Activated B cell treated with CpG ODN at 0.5 μM for 24 hours (primary cell): ENCODE measurements at regions of chr14 and their contacts with region 1.

Region 1: DNA sequence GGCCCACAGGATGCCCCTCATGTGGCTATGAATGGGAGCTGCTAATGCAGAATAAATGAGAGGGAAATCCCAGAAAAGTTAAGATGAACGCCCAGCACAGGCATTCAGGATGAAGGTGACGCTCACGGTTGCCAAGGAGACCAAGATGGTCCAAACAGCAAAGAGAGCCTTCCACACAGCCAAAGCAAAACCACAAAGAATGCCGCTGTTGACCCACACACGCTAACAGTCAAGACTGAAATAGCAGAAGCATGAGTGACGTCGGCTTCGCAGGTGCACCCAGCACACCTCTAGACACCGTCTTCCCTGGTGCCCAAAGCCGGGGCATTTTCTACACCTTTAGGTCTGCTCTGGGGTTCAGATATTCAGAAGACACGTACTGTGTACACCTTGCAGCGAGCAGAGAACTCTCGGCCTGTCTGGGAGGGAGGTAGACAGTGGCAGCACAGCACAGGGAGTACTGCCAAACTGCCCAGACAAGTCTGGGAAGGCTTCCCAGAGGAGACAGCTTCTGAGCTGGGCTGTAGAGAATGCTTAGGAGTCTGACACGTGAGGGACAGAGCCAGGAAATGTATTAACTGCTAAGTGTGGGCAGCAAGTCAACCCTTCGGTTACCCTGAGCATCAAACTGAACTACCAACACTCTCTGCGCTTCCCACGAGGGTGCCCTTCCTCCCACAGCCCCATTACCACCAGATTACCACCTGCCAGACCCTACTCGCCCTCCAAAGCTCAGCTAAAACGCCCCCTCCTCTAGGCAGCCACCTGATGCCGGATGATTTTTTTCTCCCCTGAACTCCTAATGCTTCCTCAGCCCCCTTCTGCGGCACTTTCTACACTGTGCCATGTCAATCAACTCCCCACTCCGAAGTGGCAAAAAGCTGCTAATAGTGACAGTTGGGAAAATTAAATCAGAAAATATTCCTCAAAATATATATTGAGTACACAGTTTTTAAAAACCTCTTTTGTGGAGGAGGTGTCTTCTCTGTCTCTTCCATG is 50.1 kb downstream of the CCDC88C start:
- DNase-seq: peak; percentile 63
- ATAC-seq: peak; percentile 72
- H3K4me3 Mint-ChIP-seq: peak overlapping the region; percentile 66
- H3K27ac Mint-ChIP-seq: peak overlapping the region; percentile 90
- H3K4me1 Mint-ChIP-seq: peaks cover 89% of the 10 kb centered on the region
- H3K27me3 Mint-ChIP-seq: no peaks in the 10 kb centered on the region
- CTCF ChIP-seq: no peak

Region 2: GRCh38 chr14:91249841-91250616 is 117.4 kb before region 1 on chr14:
- CTCF ChIA-PET with region 1: no interaction called
- POLR2A ChIA-PET with region 1: no interaction called
- intact Hi-C with region 1: no loop called
- DNase-seq: no peak
- ATAC-seq: peak; percentile 64
- H3K4me3 Mint-ChIP-seq: peak overlapping the region; percentile 62
- H3K27ac Mint-ChIP-seq: peak overlapping the region; percentile 90
- H3K4me1 Mint-ChIP-seq: peaks cover 45% of the 10 kb centered on the region
- H3K27me3 Mint-ChIP-seq: no peaks in the 10 kb centered on the region
- CTCF ChIP-seq: no peak

Region 3: GRCh38 chr14:91350813-91351511 is 16.5 kb before region 1 on chr14:
- CTCF ChIA-PET with region 1: interaction called, 4 read pairs
- POLR2A ChIA-PET with region 1: interaction called, 29 read pairs
- intact Hi-C with region 1: loop called (anchors 1 kb)
- DNase-seq: no peak
- ATAC-seq: peak; percentile 60
- H3K4me3 Mint-ChIP-seq: peak overlapping the region; percentile 81
- H3K27ac Mint-ChIP-seq: peak overlapping the region; percentile 85
- H3K4me1 Mint-ChIP-seq: peaks cover 93% of the 10 kb centered on the region
- H3K27me3 Mint-ChIP-seq: no peaks in the 10 kb centered on the region
- CTCF ChIP-seq: no peak

Region 4: DNA sequence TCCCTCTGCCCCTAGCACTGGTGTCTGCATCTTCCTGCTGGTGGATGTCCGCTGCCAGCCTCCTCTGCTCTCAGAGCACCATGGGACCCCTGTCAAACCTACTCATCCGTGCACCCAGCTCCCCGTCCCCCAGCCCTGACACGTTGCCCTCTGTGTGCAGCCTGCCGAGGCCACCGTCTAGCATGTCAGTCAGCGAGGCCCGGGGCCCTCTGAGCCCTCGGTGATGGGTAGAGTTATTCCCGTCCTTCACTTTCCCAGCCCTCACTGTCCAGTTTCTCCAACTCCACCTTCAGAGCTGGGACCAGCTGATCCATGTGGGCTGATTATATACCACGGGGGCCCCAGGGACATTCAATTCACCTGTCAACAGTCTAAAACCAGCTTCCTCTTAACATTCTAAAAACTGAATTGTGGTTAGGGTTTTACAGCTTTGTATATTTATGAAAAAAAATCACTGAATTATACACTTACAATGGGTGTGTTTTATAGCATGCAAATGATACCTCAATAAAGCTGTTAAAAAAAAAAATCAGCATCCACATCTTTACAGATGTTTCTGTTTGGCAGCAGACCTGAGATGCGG is 11.2 kb before region 1 on chr14:
- CTCF ChIA-PET with region 1: interaction called, 4 read pairs
- POLR2A ChIA-PET with region 1: interaction called, 29 read pairs
- intact Hi-C with region 1: loop called (anchors 1 kb)
- DNase-seq: no peak
- ATAC-seq: peak; percentile 41
- H3K4me3 Mint-ChIP-seq: peak overlapping the region; percentile 74
- H3K27ac Mint-ChIP-seq: peak overlapping the region; percentile 3
- H3K4me1 Mint-ChIP-seq: peaks cover 73% of the 10 kb centered on the region
- H3K27me3 Mint-ChIP-seq: no peaks in the 10 kb centered on the region
- CTCF ChIP-seq: no peak

Region 5: GRCh38 chr14:91418387-91419043 is 51.0 kb after region 1 on chr14:
- CTCF ChIA-PET with region 1: interaction called, 9 read pairs
- POLR2A ChIA-PET with region 1: interaction called, 114 read pairs
- intact Hi-C with region 1: loop called (anchors 1 kb)
- DNase-seq: peak; percentile 84
- ATAC-seq: peak; percentile 37
- H3K4me3 Mint-ChIP-seq: peak overlapping the region; percentile 81
- H3K27ac Mint-ChIP-seq: peak overlapping the region; percentile 93
- H3K4me1 Mint-ChIP-seq: peaks cover 42% of the 10 kb centered on the region
- H3K27me3 Mint-ChIP-seq: no peaks in the 10 kb centered on the region
- CTCF ChIP-seq: peak; percentile 36